PC-9 (cell line): ENCODE measurements at regions of chr1 and their contacts with region 1.

Region 1: DNA sequence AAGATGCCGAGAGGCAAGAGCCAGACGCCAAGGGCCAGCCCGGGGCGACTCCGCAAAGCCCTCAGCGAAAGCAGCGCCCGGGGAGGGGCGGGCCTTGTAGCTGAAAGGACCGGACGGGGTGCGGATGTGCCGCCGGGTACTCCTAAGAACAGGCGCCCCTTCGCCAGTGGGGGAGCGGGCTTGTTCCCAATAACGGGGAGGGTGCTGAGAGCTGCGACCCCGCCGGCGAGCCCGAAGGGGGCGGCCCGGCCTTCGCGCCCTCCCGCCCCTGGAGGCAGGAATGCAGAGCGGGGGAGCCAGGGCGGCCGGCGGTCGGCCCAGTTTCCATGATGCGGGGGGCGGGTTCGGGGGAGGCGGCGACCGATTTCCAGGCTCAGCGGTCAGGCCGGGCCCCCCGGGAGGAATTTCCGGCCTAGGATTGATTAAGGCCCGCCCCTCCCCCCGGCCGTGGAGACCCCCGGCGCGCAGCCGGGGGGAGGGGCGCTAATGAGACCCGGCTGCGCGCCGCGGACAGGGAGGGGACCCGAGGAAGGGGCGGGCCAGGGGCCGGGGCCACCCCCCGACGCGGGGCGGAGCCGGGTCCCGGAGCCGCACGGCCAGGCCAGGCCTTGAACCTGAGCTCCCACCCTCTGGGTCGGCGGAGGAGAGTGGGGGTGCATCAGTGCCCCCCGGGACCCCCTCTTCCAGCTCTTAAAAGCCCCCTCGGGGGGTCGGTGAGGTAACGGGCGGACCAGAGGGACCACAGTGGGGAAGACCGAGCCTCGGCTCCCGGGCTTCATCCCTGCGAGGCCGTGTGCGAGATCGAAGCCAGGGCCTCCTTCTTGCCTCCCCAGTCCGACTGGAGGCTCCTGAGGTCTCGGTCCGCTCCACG is 898 bp upstream of the TMEM200B start:
- DNase-seq: peak in 1 of 2 experiments; percentile 70
- H3K4me3 ChIP-seq: peak overlapping the region; percentile 53
- H3K27ac ChIP-seq: no peak overlapping the region
- H3K4me1 ChIP-seq: no peaks in the 10 kb centered on the region
- H3K27me3 ChIP-seq: 0 out of 2 replicates have a peak, but pooled peaks cover 3% of the 10 kb centered on the region
- CTCF ChIP-seq: peak; percentile 58

Region 2: DNA sequence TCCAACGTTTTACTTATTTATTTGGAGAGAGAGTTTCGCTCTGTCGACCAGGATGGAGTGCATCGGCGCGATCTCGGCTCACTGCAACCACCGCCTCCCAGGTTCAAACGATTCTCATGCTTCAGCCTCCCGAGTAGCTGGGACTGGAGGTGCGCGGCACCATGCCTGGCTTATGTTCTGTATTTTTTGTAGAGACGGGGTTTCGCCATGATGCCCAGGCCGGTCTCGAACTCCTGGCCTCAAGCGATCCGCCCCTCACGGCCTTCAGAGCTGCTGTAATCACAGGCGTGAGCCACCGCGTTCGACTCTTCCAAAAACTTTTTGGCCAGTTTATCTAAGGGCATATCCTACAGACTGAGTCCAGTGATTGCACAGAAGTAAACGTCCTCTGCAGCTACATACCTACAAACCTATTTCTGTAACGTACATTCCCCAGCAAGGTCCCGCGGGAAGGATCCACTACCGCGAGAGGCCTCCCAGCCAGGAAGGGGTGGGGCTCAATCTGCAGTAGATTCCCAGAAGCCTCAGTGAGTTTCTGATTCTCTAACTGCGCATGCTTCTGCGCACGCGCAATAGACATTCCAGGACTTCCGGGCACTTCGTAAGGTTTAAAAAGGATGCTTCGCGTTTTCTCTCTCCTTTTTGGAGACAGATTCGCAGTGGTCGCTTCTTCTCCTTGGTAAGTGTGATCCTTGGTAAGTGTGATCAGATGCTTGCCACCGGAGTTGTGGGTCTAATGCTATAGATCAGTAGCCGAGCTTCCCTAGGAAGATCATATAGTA is 619.0 kb before region 1 on chr1 and contains the start of gene RCC1:
- CTCF ChIA-PET with region 1: no interaction called
- POLR2A ChIA-PET with region 1: interaction called, 17 read pairs
- intact Hi-C with region 1: no loop called
- DNase-seq: peak; percentile 92 to 95
- H3K4me3 ChIP-seq: peak within 1 kb of the TSS; percentile 83
- H3K27ac ChIP-seq: peak within 1 kb of the TSS; percentile 99
- H3K4me1 ChIP-seq: peaks cover 38% of the 10 kb centered on the region
- H3K27me3 ChIP-seq: 0 out of 2 replicates have a peak, but pooled peaks cover 3% of the 10 kb centered on the region
- CTCF ChIP-seq: no peak
- total RNA-seq, gene RCC1: 134 and 156 TPM in 2 replicates

Region 3: DNA sequence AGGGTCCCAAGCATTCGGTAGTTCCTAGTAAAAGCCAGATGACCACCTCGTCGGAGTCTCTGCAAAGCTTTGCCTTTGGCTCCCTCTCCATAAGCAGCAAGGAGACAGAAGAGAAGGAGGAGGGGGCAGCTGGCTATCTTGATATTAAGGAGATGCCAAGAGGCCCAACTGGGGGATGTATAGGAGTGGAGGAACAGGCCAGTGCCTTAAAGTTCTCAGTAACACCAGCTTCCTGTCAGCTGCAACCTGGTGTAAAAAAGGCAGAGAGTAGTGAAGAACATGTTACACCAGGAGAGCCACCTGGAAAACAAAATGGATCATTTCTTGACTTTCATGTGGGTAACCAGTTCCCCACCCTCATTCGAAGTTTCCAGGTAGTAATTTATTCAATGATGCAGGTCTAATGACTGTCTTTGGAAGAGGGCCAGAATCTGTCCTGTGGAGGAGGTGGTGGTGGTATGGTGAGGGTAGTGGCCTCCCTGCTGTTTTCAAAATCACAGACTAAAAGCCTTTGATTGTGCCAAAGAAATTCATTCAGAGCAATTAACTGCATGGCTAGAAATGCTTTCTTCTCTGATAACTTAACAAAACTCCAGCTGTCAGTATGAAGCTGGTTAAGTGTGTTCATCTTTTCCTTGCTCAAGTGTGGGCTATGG is 28.2 kb before region 1 on chr1:
- CTCF ChIA-PET with region 1: interaction called, 10 read pairs
- POLR2A ChIA-PET with region 1: no interaction called
- intact Hi-C with region 1: no loop called
- DNase-seq: no peak
- H3K4me3 ChIP-seq: no peak overlapping the region
- H3K27ac ChIP-seq: no peak overlapping the region
- H3K4me1 ChIP-seq: peaks cover 8% of the 10 kb centered on the region; the same call in 1 of the 2 replicates
- H3K27me3 ChIP-seq: no peaks in the 10 kb centered on the region
- CTCF ChIP-seq: no peak

Region 4: GRCh38 chr1:29181413-29182225 is 57.0 kb after region 1 on chr1 and contains the start of gene SRSF4:
- CTCF ChIA-PET with region 1: no interaction called
- POLR2A ChIA-PET with region 1: no interaction called
- intact Hi-C with region 1: no loop called
- DNase-seq: peak; percentile 86 to 99
- H3K4me3 ChIP-seq: peak within 1 kb of the TSS; percentile 92
- H3K27ac ChIP-seq: peak within 1 kb of the TSS; percentile 88
- H3K4me1 ChIP-seq: peaks cover 33% of the 10 kb centered on the region
- H3K27me3 ChIP-seq: no peaks in the 10 kb centered on the region
- CTCF ChIP-seq: peak; percentile 60
- total RNA-seq, gene SRSF4: 75.7 and 87.6 TPM in 2 replicates

Region 5: GRCh38 chr1:29282924-29283811 is 158.6 kb after region 1 on chr1:
- CTCF ChIA-PET with region 1: no interaction called
- POLR2A ChIA-PET with region 1: no interaction called
- intact Hi-C with region 1: no loop called
- DNase-seq: peak; percentile 41 to 50
- H3K4me3 ChIP-seq: no peak overlapping the region
- H3K27ac ChIP-seq: no peak overlapping the region
- H3K4me1 ChIP-seq: no peaks in the 10 kb centered on the region
- H3K27me3 ChIP-seq: no peaks in the 10 kb centered on the region
- CTCF ChIP-seq: no peak

Region 6: DNA sequence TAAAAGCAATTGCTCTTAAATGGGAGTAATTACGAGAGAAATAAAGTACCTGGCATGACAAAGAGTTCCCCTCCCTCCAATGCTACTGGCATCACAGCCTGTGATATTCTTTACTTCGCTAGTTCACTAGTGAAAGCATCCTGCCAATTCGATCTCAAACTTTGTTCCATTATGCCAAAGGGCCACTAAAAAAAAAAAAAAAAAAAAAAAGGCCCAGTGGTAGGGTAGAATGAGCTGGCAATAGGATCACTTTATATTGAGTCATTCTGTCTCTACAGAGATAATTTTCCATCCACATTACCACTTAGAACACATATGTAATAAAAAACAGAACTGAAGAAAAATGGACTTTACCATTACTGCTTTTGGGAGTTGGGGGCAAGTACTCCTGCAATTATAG is 1929.7 kb after region 1 on chr1:
- CTCF ChIA-PET with region 1: no interaction called
- POLR2A ChIA-PET with region 1: interaction called, 35 read pairs
- intact Hi-C with region 1: no loop called
- DNase-seq: no peak
- H3K4me3 ChIP-seq: no peak overlapping the region
- H3K27ac ChIP-seq: no peak overlapping the region
- H3K4me1 ChIP-seq: 0 out of 2 replicates have a peak, but pooled peaks cover 6% of the 10 kb centered on the region
- H3K27me3 ChIP-seq: no peaks in the 10 kb centered on the region
- CTCF ChIP-seq: no peak